HepG2 (cell line): ENCODE measurements at regions of chr16 and their contacts with region 1.

Region 1: GRCh38 chr16:48687421-48688038 is 77.5 kb upstream of the N4BP1 start:
- DNase-seq: peak; percentile 84
- ATAC-seq: peak; percentile 100
- H3K4me3 ChIP-seq: no peak overlapping the region
- H3K27ac ChIP-seq: no peak overlapping the region
- H3K4me1 ChIP-seq: 0 out of 2 replicates have a peak, but pooled peaks cover 6% of the 10 kb centered on the region
- H3K27me3 ChIP-seq: no peaks in the 10 kb centered on the region; a peak in 1 of 5 replicates
- CTCF ChIP-seq: peak; percentile 89
- EP300 ChIP-seq: no peak
- POLR2A ChIP-seq: no peak
- RAD21 ChIP-seq: peak; percentile 41; the same call in 1 of the 2 replicates

Region 2: DNA sequence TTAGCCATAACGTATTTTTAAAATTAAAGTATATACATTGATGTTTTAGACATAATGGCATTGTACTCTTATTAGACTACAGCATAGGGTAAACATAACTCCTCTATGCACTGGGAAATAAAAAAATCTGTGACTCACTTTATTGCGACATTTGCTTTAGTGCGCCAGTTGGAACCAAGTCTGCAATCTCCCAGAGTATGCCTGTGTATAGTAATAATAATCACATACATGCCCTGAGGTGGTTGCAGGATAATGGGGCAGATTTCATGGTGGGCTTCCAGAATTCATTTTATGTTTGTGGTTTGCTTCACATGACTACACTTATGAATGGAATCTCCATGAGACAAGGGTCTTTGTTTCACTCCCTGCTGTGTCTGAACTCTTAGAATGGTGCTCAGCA is 10.7 kb before region 1 on chr16:
- CTCF ChIA-PET with region 1: no interaction called
- POLR2A ChIA-PET with region 1: no interaction called
- in situ Hi-C with region 1: no loop called
- intact Hi-C with region 1: no loop called
- DNase-seq: no peak
- ATAC-seq: no peak
- H3K4me3 ChIP-seq: no peak overlapping the region
- H3K27ac ChIP-seq: no peak overlapping the region
- H3K4me1 ChIP-seq: no peaks in the 10 kb centered on the region
- H3K27me3 ChIP-seq: no peaks in the 10 kb centered on the region
- CTCF ChIP-seq: no peak
- EP300 ChIP-seq: no peak
- POLR2A ChIP-seq: no peak
- RAD21 ChIP-seq: no peak

Region 3: DNA sequence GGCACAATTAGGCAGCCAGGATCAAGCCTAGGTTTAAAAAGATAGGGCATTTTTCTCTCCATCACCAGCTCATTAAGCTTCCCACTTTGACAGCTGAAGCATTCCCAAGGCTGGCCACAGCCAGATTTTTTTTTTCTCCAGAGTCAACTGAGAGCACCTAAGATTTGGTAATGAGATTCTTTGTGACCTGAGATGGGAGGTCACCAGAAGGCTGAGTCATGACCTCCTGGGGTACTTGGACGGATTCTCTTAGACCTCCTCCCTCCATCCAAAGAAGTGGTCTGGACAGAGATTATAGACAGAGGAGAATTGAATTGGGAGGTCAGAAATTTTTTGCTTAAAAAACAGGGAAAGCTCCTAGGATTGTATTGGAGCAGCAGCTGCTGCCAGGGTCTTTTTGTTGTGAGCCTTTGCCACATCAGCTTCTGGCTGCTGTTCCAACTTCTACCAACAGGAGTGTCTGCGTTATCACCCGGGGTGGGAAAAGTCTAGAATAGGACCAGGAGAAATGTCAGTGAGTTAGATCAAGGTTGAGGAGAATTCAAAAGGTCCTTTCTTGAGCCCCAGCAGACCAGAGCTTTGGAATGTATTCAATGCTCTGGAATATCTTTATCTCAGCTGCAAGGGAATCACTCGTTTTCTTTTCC is 143.7 kb after region 1 on chr16:
- CTCF ChIA-PET with region 1: no interaction called
- POLR2A ChIA-PET with region 1: no interaction called
- in situ Hi-C with region 1: no loop called
- intact Hi-C with region 1: no loop called
- DNase-seq: peak; percentile 10
- ATAC-seq: peak; percentile 81
- H3K4me3 ChIP-seq: no peak overlapping the region
- H3K27ac ChIP-seq: no peak overlapping the region
- H3K4me1 ChIP-seq: no peaks in the 10 kb centered on the region
- H3K27me3 ChIP-seq: no peaks in the 10 kb centered on the region
- CTCF ChIP-seq: no peak
- EP300 ChIP-seq: no peak
- POLR2A ChIP-seq: no peak
- RAD21 ChIP-seq: no peak

Region 4: GRCh38 chr16:49000594-49000993 is 313.1 kb after region 1 on chr16:
- CTCF ChIA-PET with region 1: no interaction called
- POLR2A ChIA-PET with region 1: no interaction called
- in situ Hi-C with region 1: no loop called
- intact Hi-C with region 1: loop called (anchors 1 kb)
- DNase-seq: no peak
- ATAC-seq: peak; percentile 45; the same call in 1 of the 3 replicates
- H3K4me3 ChIP-seq: no peak overlapping the region
- H3K27ac ChIP-seq: no peak overlapping the region
- H3K4me1 ChIP-seq: peaks cover 7% of the 10 kb centered on the region; the same call in 1 of the 2 replicates
- H3K27me3 ChIP-seq: no peaks in the 10 kb centered on the region
- CTCF ChIP-seq: peak; percentile 45
- EP300 ChIP-seq: no peak
- POLR2A ChIP-seq: no peak
- RAD21 ChIP-seq: no peak

Region 5: DNA sequence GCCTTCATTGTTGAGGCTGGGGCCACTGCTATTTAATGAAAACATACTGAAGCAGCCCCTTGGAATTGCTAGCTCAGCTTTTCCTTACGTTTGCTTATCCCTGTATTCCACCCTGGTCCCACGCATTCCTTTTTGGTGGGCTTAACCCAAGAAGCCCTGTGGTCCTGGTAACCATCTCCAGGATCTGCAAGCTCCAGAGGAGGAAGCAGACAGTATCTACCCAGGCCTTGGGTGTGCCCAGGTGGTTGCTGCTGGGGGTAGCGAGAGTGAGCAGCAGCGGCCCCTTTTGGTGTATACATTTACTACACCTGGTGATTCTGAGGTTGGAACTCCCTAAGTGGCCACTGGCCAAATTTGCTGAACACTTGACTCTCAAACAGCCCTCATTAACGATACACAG is 496.4 kb after region 1 on chr16:
- CTCF ChIA-PET with region 1: interaction called, 4 read pairs
- POLR2A ChIA-PET with region 1: no interaction called
- in situ Hi-C with region 1: no loop called
- intact Hi-C with region 1: loop called (anchors 5 kb)
- DNase-seq: peak; percentile 20
- ATAC-seq: peak; percentile 93
- H3K4me3 ChIP-seq: no peak overlapping the region
- H3K27ac ChIP-seq: no peak overlapping the region
- H3K4me1 ChIP-seq: no peaks in the 10 kb centered on the region
- H3K27me3 ChIP-seq: no peaks in the 10 kb centered on the region
- CTCF ChIP-seq: peak; percentile 74
- EP300 ChIP-seq: no peak
- POLR2A ChIP-seq: no peak
- RAD21 ChIP-seq: no peak

Region 6: DNA sequence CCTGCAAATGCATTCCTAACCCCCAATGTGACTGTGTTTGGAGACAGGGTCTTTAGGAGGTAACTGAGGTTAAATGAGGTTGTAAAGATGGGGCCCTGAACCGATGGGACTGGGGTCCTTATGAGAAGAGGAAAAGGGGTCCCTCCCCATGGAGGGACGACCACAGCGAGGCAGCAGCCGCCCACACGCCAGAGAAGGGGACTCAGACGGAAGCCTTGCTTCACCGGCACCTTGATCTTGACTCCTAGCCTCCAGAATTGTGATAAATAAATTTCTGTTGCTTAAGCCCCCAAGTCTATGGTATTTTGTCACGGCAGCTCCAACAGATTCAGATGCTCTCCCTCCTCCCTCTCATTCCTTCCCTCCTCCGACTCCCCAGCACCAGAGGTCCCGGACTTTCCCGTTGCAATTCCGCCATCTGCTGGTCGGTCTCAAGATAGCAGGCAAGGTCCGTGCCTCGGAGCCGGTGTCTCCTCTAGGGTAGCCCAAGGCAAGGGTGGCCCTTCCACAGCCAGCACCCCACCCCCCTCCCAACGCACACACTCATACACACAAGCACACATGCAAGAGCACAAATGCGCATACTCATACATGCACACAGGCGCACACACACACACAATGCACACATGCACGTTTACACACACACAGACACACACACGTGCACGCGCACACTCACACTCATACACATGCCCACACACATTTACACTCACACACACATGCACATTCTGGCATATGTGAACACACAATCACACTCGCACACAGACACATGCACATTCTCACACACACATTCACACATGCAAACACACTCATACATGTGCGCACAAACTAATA is 663.0 kb after region 1 on chr16:
- CTCF ChIA-PET with region 1: interaction called, 40 read pairs
- POLR2A ChIA-PET with region 1: no interaction called
- in situ Hi-C with region 1: loop called (anchors 5 kb)
- intact Hi-C with region 1: loop called (anchors 1 kb)
- DNase-seq: peak; percentile 37
- ATAC-seq: peak; percentile 76
- H3K4me3 ChIP-seq: no peak overlapping the region
- H3K27ac ChIP-seq: no peak overlapping the region
- H3K4me1 ChIP-seq: no peaks in the 10 kb centered on the region
- H3K27me3 ChIP-seq: no peaks in the 10 kb centered on the region
- CTCF ChIP-seq: peak; percentile 96
- EP300 ChIP-seq: no peak
- POLR2A ChIP-seq: no peak
- RAD21 ChIP-seq: peak; percentile 76